Activated CD4-positive, alpha-beta T cell treated with anti-CD3 and anti-CD28 coated beads, Interleukin-2, amount 10 ng/mL, durations not matched to agents 24 days and 14 days (primary cell): ENCODE measurements at regions of chr10 and their contacts with region 1.

Region 1: DNA sequence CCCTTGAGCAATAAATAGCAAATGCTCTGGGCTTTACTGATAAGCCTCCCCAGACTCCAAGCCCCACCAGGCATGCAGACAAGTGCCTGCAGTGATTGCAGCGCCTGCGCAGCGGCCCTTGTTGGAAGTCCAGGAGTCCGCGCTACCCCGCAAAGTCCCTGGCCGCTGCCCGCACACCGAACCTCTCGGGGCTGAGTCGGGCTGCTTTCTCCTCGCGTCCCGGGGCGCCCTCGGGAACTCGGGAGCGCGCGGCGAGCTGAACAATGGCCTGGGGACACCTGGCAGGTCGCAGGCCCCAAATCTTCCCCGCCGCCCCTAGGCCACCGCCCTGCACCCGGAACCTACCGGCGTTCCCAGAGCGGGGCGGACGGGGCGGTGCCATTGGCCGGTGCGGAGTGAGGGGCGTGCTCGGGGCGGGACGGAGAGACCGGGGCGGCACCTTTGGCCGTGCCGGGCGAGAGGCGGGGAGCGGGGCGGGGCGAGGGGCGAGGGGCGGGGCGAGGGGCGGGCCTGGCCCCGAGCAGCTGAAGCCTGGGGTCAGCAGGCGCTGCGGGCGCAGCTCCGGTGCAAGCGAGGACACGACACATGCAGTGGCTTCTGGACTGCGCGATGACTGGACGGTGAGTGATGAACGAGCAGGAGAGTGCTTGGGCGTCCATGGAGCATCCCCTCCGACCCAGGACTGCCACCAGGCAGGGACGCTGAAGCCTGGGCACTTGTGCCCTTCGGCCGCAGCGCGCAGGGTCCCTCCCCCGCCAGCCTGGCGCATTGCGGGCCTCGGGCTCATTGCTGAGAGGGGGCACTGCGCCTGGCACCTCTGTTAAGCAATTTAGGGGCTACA is at the start of gene RASSF4:
- DNase-seq: peak; percentile 99
- H3K4me3 Mint-ChIP-seq: peak within 1 kb of the TSS; percentile 84
- H3K27ac Mint-ChIP-seq: peak within 1 kb of the TSS; percentile 51
- H3K4me1 Mint-ChIP-seq: peaks cover 13% of the 10 kb centered on the region
- H3K27me3 Mint-ChIP-seq: no peaks in the 10 kb centered on the region
- total RNA-seq, gene RASSF4: 1.3 and 1.5 TPM in 2 replicates

Region 2: GRCh38 chr10:44974628-44975431 is 15.4 kb after region 1 on chr10:
- intact Hi-C with region 1: loop called (anchors 1 kb)
- DNase-seq: peak; percentile 93
- H3K4me3 Mint-ChIP-seq: peak overlapping the region; percentile 77
- H3K27ac Mint-ChIP-seq: peak overlapping the region; percentile 80
- H3K4me1 Mint-ChIP-seq: peaks cover 22% of the 10 kb centered on the region
- H3K27me3 Mint-ChIP-seq: no peaks in the 10 kb centered on the region

Region 3: DNA sequence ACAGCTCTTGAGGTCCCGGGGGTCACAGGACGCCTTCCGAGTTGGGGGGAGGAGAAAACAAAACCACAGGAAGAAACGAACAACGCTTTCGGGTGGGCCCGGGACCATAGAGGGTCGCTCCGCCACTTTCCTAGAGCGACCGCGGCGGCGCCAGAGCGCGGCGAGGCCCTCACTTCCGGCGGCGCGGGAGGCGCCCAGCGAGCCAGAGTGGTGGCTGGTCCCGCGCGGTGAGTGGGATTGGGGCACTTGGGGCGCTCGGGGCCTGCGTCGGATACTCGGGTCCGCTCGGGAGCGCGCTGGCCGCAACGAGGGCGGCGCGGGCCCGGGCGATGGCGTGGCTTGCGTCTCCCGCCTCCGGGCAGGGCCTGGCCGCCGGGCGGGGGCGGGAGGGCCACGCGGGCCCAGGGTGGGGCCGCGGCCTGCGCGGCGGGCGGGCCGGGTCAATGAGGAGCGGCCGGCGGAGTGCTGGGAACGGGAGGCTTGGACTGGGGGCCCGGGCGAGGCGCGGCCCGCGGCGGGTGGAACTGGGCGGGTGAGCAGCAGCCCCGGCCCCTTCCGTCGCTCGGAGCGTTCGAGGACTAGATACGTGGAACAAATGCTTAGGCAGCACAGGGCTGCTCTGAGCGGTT is 41.4 kb after region 1 on chr10 and contains the start of gene ZNF22:
- intact Hi-C with region 1: loop called (anchors 2 kb)
- DNase-seq: peak; percentile 90
- H3K4me3 Mint-ChIP-seq: peak within 1 kb of the TSS; percentile 94
- H3K27ac Mint-ChIP-seq: peak within 1 kb of the TSS; percentile 96
- H3K4me1 Mint-ChIP-seq: peaks cover 24% of the 10 kb centered on the region
- H3K27me3 Mint-ChIP-seq: peaks cover 9% of the 10 kb centered on the region
- total RNA-seq, gene ZNF22: 26.0 and 26.7 TPM in 2 replicates